Mammary epithelial cell (primary cell): ENCODE measurements at regions of chr6 and their contacts with region 1.

Region 1: GRCh38 chr6:119110601-119111548 is 32.4 kb upstream of the FAM184A start:
- DNase-seq: peak; percentile 41
- H3K4me3 ChIP-seq: no peak overlapping the region
- H3K27ac ChIP-seq: no peak overlapping the region
- H3K4me1 ChIP-seq: no peaks in the 10 kb centered on the region
- H3K27me3 ChIP-seq: no peaks in the 10 kb centered on the region
- CTCF ChIP-seq: peak; percentile 53 to 64

Region 2: DNA sequence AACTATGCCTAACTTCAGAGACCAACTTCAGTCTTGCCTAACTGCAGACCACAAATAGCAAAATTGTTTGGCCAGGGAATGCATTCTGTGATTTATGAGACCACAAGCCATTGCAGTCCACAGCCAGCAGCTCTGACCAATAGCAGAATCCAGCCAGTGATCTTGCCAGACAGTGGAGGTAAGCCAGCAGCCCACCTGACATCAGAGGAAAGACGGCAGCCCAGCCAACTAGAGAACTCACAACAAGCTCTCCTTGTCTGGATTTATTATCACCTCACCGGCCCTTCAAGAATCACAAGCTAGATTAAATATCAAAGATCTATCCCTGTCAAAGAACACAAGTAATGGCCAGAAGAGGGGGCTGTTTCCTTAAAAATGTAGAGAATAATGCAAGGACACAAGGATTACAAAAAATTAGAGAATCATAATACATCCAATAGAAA is 1270.3 kb before region 1 on chr6:
- CTCF ChIA-PET with region 1: no interaction called
- dilution Hi-C with region 1: no loop called
- in situ Hi-C with region 1: no loop called
- intact Hi-C with region 1: loop called (anchors 5 kb)
- DNase-seq: peak; percentile 42
- H3K4me3 ChIP-seq: no peak overlapping the region
- H3K27ac ChIP-seq: no peak overlapping the region
- H3K4me1 ChIP-seq: no peaks in the 10 kb centered on the region
- H3K27me3 ChIP-seq: peaks cover 1% of the 10 kb centered on the region
- CTCF ChIP-seq: peak; percentile 29 to 53

Region 3: GRCh38 chr6:118893807-118894424 is 217.0 kb before region 1 on chr6 and contains the start of gene ASF1A:
- CTCF ChIA-PET with region 1: no interaction called
- dilution Hi-C with region 1: no loop called
- in situ Hi-C with region 1: no loop called
- intact Hi-C with region 1: loop called (anchors 1 kb)
- DNase-seq: peak; percentile 98
- H3K4me3 ChIP-seq: peak within 1 kb of the TSS; percentile 82 to 99 (median 97)
- H3K27ac ChIP-seq: peak within 1 kb of the TSS; percentile 89
- H3K4me1 ChIP-seq: peaks cover 22% of the 10 kb centered on the region
- H3K27me3 ChIP-seq: no peaks in the 10 kb centered on the region
- CTCF ChIP-seq: peak; percentile 50 to 74
- total RNA-seq, gene ASF1A: 19.8 to 29.0 TPM

Region 4: GRCh38 chr6:118963003-118963402 is 147.9 kb before region 1 on chr6:
- CTCF ChIA-PET with region 1: interaction called, 3 read pairs
- dilution Hi-C with region 1: no loop called
- in situ Hi-C with region 1: loop called in 1 of 2 experiments (anchors 25 kb)
- intact Hi-C with region 1: loop called (anchors 1 kb)
- DNase-seq: no peak
- H3K4me3 ChIP-seq: no peak overlapping the region
- H3K27ac ChIP-seq: no peak overlapping the region
- H3K4me1 ChIP-seq: no peaks in the 10 kb centered on the region
- H3K27me3 ChIP-seq: no peaks in the 10 kb centered on the region
- CTCF ChIP-seq: peak; percentile 3 to 34

Region 5: DNA sequence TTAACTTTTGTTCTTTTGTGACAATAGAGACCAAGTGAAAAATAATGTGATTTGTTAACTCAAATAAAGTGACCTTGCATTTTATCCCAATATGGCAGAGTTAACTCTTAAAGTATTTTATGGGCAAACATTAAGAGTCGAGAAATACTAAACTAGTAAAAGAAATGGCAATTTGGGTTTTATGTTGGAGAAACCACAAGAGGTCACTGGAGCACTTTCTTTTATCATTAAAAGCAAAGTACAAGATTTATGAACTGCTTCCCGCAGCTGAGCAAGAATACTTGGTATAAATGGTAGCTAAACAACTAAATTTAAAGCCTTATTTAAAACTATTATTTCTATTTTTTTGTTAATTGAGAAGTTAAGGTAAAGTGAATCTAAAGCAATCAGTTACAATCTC is 142.5 kb before region 1 on chr6:
- CTCF ChIA-PET with region 1: interaction called, 3 read pairs
- dilution Hi-C with region 1: no loop called
- in situ Hi-C with region 1: loop called in 1 of 2 experiments (anchors 25 kb)
- intact Hi-C with region 1: loop called (anchors 1 kb)
- DNase-seq: peak; percentile 4
- H3K4me3 ChIP-seq: no peak overlapping the region
- H3K27ac ChIP-seq: no peak overlapping the region
- H3K4me1 ChIP-seq: no peaks in the 10 kb centered on the region
- H3K27me3 ChIP-seq: no peaks in the 10 kb centered on the region
- CTCF ChIP-seq: peak; percentile 28 to 40